ENCODE measurements at regions of chr21 and their contacts with region 1.

Region 1: DNA sequence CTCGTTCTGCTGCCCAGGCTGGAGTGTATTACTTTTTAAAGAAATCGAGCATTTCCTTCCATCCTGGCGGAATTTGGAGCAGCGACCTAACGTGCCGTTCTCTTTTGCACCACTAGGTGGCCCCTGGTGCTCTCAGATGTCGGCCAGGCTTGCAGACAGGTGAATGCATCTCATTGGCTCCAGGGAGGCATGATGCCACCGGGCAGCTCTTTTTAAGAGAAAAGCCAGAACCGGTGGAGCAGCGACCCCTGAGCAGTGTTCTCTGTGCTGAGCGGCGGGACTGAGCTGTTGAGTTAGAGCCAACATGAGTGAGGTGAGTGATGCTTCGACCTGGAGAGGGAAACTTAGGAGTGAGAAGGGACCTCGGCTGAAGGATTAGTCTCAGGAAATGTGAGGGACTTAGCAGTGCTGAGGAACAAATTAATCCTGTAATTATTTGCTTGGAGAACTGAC is at the start of gene PCP4:
- H3K4me3 ChIP-seq: no peak within 1 kb of the TSS
- H3K27ac ChIP-seq: no peak within 1 kb of the TSS
- H3K4me1 ChIP-seq: peaks cover 6% of the 10 kb centered on the region; the same call in 1 of the 2 replicates
- CTCF ChIP-seq: peak; percentile 61

Region 2: GRCh38 chr21:39788383-39788782 is 78.8 kb before region 1 on chr21:
- CTCF ChIA-PET with region 1: interaction called, 17 read pairs
- POLR2A ChIA-PET with region 1: no interaction called
- H3K4me3 ChIP-seq: no peak overlapping the region
- H3K27ac ChIP-seq: no peak overlapping the region
- H3K4me1 ChIP-seq: no peaks in the 10 kb centered on the region
- CTCF ChIP-seq: peak; percentile 97

Region 3: DNA sequence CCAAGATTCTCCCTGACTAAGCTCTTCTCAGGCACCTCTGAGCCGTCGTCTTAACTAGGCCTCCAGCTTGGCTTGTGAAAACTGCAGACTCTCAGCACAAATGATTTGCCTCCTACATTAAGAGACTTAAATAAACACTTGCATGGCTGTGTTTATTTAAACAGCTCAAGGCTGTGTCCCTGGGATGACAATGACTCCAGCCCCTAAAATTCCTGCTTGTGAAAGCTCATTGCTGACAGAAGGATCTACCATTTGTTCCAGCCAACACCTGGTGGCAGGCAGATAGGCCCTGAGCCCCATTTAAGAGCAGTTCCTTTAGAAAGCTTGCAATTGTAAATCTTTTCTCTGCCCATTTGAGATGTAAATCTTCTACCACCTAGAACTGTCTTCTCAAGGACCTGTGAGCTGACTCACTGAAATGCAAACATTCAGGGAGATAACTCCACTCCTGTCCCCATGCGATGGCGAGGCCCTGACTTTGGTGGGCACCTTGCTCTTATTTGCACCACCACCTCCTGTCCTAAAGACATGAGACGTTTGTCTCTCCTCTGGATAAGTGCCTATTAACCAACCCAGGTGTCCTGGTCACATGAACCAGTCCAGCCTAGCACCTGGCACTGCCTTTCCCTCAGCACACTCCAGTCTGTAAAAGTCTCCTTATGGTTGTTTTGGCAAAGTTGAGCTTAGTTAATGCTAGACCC is 15.1 kb before region 1 on chr21:
- CTCF ChIA-PET with region 1: interaction called, 24 read pairs
- POLR2A ChIA-PET with region 1: no interaction called
- H3K4me3 ChIP-seq: no peak overlapping the region
- H3K27ac ChIP-seq: peak overlapping the region; percentile 34; the same call in 1 of the 2 replicates
- H3K4me1 ChIP-seq: peaks cover 10% of the 10 kb centered on the region; the same call in 1 of the 2 replicates
- CTCF ChIP-seq: no peak

Region 4: DNA sequence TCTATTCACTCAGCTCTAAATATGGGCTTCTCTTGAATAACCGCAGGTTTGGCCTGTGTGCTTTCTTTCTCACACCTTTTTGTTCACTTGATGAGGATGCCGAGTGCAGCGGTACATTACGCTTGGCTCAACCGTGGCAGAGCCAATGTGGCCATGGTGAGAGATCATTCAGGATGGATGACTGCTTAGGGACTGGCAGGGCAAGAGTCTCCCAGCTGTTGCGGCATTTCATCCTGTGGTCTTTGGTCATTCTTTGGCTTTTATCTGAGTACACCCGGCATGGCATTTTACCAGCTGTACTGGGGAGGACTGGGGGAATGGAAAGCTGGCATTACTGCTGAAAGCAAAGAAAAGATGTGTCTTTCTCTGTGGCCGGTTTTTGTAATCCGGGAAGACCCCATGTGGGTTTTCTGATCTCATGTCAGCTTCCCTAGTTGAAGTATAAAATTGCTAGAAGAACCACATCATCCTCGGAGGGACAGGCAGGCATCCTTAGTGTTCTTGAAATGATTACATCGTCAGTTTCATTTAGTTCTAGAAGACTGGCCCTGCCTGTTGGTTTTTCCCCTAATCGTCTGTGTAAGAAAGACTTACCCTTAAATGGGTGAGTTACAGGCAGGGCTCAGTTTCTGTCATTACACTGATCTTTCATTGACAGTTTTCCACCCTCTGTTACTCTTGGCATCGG is 15.1 kb after region 1 on chr21:
- CTCF ChIA-PET with region 1: interaction called, 17 read pairs
- POLR2A ChIA-PET with region 1: no interaction called
- H3K4me3 ChIP-seq: no peak overlapping the region
- H3K27ac ChIP-seq: no peak overlapping the region
- H3K4me1 ChIP-seq: no peaks in the 10 kb centered on the region
- CTCF ChIP-seq: no peak

Region 5: DNA sequence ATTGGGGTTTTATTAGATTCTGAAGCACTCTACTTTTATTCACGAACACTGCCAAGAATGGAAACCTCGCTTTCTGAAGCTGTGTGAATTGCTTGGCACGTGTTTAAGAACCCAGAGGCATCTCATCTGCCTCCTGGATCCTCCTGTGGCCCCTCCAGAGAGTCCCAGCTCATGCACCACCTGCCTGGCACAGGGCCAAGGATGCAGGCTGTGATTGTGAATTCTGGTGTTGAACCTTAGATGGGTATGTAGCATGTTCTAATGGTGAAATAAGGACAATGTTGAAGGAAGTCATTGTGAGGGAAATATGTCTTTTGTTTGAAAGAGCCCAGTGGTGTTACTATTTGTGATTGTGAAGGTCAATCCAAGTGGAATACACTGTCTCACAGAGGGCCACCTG is 26.2 kb after region 1 on chr21:
- CTCF ChIA-PET with region 1: interaction called, 11 read pairs
- POLR2A ChIA-PET with region 1: no interaction called
- H3K4me3 ChIP-seq: no peak overlapping the region
- H3K27ac ChIP-seq: no peak overlapping the region
- H3K4me1 ChIP-seq: no peaks in the 10 kb centered on the region
- CTCF ChIP-seq: no peak

Region 6: DNA sequence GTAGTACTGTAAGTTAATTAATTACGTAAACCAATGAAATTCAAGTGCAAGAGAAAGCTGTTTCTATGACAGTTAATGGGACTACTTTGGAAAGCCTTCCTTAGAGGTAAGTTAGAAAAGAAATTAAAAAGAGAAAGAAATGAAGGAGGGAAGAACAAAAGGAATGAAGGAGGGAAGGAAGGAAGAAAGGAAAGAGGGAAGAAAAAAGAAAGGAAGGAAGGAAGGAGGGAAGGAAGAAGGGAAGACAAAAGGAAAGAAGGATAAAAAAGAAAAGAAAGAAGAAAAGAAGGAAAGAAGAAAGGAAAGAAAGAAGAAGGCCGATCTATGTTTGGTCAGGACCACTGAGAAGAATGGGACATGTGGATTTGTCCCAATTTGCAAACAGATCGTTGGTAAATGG is 258.8 kb after region 1 on chr21:
- CTCF ChIA-PET with region 1: interaction called, 126 read pairs
- POLR2A ChIA-PET with region 1: no interaction called
- H3K4me3 ChIP-seq: no peak overlapping the region
- H3K27ac ChIP-seq: no peak overlapping the region
- H3K4me1 ChIP-seq: no peaks in the 10 kb centered on the region
- CTCF ChIP-seq: no peak

Measured in HEK293 (cell line).